ENCODE measurements at regions of chr2 and their contacts with region 1.

Region 1: GRCh38 chr2:1538663-1539062 is 125.4 kb downstream of the TPO start:
- DNase-seq: no peak

Region 2: DNA sequence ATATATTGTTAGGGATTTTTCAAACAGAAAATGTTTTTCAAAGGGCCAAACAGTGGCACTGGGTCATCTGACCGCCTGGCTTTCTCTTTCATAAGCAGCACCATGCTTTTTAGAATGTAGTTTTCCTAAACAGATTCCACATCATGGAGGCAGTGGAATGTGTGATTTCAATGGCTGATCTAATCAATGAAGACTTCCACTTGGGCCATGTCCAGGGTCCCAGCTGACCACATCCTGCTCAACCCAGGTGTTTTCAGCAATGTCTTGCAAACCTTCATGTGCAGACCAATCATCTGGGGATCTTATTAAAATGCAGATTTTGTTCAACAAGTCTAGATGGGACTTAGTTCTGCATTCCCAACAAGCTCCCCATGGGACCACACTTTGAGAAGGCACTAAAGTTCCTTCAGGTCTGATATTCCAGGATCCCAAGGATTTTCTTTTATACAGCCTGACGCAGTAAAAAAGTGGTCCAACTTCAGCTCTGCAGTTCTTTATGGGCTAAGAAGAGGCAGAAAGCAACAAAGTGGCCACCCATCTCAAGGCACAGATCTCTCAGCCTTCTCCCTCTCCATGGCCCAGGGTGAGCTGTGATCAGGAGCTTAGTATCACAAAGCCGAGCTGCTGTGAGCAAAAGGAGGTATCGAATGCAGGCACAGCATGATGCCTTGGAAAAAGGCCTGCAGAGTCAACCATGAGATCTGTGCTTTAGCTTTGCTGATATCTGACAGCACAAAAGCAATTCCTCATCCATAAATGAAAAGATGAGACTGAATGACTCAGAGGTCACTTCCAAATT is 1254.5 kb before region 1 on chr2:
- intact Hi-C with region 1: loop called in 1 of 2 experiments (anchors 5 kb)
- DNase-seq: no peak

Region 3: DNA sequence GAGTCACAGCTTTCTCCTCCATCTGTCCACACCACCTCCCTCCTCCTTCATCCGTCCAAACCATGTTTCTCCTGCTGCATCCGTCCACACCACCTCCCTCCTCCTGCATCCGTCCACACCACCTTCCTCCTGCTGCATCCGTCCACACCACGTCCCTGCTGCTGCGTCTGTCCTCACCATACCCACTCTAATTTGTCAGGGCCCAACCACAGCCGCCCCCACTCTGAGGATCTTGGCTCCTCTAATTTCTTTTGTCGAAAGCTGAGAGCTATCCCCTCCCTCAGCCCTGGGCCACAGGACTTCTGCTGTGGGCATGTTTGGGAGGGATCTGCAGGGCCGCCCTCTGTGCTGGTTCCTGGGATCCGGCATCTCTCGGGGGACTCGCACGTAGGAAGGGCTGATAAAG is 58.0 kb before region 1 on chr2:
- intact Hi-C with region 1: no loop called
- DNase-seq: peak; percentile 58